Gastrocnemius medialis (tissue), 4 donors: ENCODE measurements at regions of chr13 and their contacts with region 1.

Region 1: DNA sequence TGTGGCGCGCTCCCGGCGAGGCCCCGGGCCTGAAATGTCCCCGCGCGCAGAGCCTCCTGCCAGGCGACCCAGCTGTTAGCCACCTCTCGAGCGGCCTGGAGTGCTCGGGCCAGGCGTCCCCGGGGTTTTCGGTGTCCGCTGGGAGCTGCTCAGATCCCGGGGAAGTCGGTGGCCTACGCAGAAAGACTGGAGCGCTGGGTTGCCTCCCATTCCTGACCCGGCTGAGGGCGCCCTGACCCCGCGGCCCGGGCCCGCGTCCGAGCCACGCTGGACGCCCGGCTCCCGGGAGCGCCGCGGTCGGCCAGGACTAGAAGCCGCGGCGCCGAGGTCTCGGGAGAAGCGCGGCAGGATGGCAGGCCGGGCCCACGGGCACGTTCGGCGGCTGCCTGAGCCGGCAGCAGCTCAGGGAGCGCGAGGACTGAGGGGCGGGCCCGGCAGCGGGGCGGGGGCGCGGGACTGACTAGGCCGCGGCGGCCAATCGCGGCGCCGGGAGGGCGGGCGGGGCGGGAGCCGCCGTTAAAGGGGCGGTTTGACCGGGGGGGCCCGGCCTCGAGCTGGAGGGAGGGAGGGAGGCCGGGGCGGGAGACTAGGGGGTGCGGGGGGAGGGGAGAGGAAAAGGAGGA is 1.3 kb upstream of the ZIC2 start:
- DNase-seq: peak; percentile 17 to 31
- ATAC-seq: peak; percentile 57 to 72
- H3K4me3 ChIP-seq: peak overlapping the region; percentile 51 to 62 (median 54)
- H3K27ac ChIP-seq: no peak overlapping the region
- H3K4me1 ChIP-seq: peaks cover 13 to 24% of the 10 kb centered on the region in 2 donors
- H3K27me3 ChIP-seq: peaks cover 89 to 94% (median 91%) of the 10 kb centered on the region in 3 donors
- CTCF ChIP-seq: no peak
- POLR2A ChIP-seq: no peak

Region 2: DNA sequence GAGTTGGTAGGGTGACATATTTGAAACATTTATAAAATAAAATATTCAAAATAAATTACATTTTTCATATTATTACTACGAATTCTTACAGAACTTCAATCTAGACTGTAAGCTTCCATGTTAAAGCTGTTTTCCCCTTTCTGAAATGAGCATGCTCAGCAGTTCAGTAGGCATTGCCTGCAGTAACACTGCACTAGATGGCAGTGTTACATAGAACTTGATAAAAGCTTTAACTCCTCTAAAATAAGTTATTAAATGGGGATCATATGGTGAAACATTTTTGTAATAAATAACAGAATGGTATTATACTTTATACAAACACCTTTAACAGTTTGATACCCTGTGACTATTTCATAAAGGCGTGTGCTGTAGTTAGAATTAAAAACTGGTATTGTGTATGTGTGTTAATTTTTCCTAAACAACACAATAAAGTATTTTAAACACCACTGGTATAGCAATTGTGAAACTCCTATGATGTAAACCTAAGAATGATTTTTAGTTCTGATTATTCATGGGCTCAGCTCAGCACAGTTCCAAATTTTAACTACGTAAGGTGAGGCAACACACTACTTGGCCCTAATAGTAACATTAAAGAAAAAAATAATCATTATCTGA is 710.6 kb before region 1 on chr13:
- in situ Hi-C with region 1: no loop called
- intact Hi-C with region 1: no loop called
- DNase-seq: no peak
- ATAC-seq: peak; percentile 78 to 80
- H3K4me3 ChIP-seq: no peak overlapping the region
- H3K27ac ChIP-seq: no peak overlapping the region
- H3K4me1 ChIP-seq: peaks cover 17 to 22% of the 10 kb centered on the region in 2 donors
- H3K27me3 ChIP-seq: no peaks in the 10 kb centered on the region
- CTCF ChIP-seq: peak; percentile 30 to 69 (median 46)
- POLR2A ChIP-seq: no peak

Region 3: GRCh38 chr13:99656092-99656745 is 324.1 kb before region 1 on chr13:
- in situ Hi-C with region 1: no loop called
- intact Hi-C with region 1: loop called (anchors 10 kb)
- DNase-seq: peak; percentile 51 to 59
- ATAC-seq: peak; percentile 79 to 83
- H3K4me3 ChIP-seq: no peak overlapping the region
- H3K27ac ChIP-seq: no peak overlapping the region
- H3K4me1 ChIP-seq: peaks cover 0 to 8% of the 10 kb centered on the region in 2 donors
- H3K27me3 ChIP-seq: no peaks in the 10 kb centered on the region
- CTCF ChIP-seq: peak; percentile 73 to 93 (median 84)
- POLR2A ChIP-seq: no peak

Region 4: GRCh38 chr13:100149389-100149788 is 169.1 kb after region 1 on chr13:
- in situ Hi-C with region 1: no loop called
- intact Hi-C with region 1: no loop called
- DNase-seq: no peak
- ATAC-seq: no peak
- H3K4me3 ChIP-seq: no peak overlapping the region
- H3K27ac ChIP-seq: no peak overlapping the region
- H3K4me1 ChIP-seq: no peaks in the 10 kb centered on the region
- H3K27me3 ChIP-seq: no peaks in the 10 kb centered on the region
- CTCF ChIP-seq: no peak
- POLR2A ChIP-seq: no peak